Activated CD8-positive, alpha-beta T cell treated with anti-CD3 and anti-CD28 coated beads for 36 hours (primary cell): ENCODE measurements at regions of chr2 and their contacts with region 1.

Region 1: DNA sequence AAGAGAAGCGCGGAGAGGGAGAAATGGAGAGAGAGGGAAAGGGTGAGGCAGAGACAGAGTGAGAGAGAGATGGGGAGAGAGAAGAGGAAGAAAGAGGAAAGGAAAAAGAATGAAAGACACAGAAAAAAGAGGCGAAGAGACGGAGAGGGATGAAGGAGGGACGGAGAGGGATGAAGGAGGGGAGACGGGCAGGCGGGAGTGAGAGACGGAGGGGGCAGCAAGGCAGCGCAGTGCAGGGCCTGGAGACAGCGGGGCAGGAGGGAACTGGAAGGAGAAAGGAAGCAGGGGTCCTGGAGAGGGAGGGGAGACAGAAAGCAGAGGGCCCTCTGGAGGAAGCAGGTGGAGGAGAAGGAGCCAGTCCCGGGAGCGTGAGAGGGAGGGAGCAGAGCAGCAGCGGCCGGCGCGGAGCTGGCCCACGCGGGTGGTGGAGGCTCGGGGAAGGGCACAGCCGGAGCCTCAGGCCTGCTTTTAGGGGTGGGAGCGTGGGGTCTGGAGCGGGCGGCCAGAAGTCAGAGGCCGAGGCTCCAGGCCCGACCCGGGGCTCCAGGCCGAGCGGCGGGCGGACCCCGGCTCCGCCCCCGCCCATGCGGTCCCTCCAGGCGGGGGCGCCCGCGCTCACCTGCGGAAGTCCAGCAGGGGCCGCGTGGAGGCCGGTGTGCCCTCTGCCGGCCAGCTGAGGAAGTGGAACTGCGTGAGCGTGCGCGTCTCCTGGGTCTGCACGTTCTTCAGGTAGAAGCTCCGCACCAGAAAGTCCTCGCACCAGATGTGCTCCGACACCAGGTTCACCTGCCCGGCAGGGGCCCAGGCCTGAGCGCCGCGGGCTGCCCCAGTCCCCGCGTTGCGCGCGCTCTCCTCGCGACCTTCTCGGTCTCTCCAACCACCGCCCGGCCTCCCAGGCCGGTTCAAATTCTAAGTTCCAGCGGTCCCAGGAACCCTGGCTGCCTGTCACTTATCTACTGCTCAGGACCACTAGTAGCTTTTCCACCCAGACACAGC is 14.5 kb downstream of the PTPRN start:
- DNase-seq: peak; percentile 90
- ATAC-seq: peak; percentile 93
- H3K4me3 Mint-ChIP-seq: peak overlapping the region; percentile 64
- H3K27ac Mint-ChIP-seq: peak overlapping the region; percentile 77
- H3K4me1 Mint-ChIP-seq: peaks cover 32% of the 10 kb centered on the region
- H3K27me3 Mint-ChIP-seq: peaks cover 3% of the 10 kb centered on the region
- CTCF ChIP-seq: peak; percentile 99

Region 2: DNA sequence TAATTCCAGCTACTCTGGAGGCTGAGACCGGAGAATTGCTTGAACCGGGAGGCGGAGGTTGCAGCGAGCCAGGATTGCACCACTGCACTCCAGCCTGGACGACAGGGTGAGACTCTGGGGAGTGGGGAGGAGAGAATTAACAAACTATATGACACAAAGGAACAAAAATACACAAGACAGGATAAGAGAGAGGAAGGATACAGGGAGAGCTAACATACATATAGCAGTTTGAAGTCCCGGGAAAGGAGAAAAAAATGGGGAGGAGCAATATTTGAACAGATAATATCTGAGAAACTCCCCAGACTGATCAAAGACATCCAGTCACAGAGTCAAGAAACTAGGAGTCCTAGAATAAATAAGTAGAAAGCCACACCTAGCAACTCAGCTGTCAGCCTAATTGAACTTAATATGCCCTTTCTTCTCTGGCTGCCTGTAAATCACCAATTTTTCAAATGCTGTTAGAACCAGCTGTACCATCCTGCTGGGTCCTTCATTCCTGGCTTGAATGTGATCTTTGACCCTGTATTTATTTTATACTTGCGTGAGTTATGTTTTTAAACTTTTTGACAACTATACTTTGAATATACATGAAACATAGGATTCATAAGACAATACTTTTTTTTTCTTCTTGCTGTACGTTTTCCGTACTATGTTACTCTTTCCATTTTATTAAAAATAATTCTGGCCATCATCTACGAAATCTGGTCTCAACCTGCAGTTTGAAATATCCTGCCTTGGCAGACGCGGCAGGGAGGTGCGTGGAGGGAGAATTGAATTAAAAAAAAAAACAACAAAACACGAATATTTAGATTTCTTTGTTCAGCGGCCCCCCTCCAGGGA is 513.6 kb before region 1 on chr2:
- CTCF ChIA-PET with region 1: no interaction called
- POLR2A ChIA-PET with region 1: no interaction called
- intact Hi-C with region 1: no loop called
- DNase-seq: no peak
- ATAC-seq: no peak
- H3K4me3 Mint-ChIP-seq: no peak overlapping the region
- H3K27ac Mint-ChIP-seq: no peak overlapping the region
- H3K4me1 Mint-ChIP-seq: peaks cover 5% of the 10 kb centered on the region
- H3K27me3 Mint-ChIP-seq: peaks cover 42% of the 10 kb centered on the region
- CTCF ChIP-seq: no peak

Region 3: GRCh38 chr2:219099329-219099728 is 195.3 kb before region 1 on chr2:
- CTCF ChIA-PET with region 1: no interaction called
- POLR2A ChIA-PET with region 1: no interaction called
- intact Hi-C with region 1: no loop called
- DNase-seq: no peak
- ATAC-seq: no peak
- H3K4me3 Mint-ChIP-seq: no peak overlapping the region
- H3K27ac Mint-ChIP-seq: no peak overlapping the region
- H3K4me1 Mint-ChIP-seq: peaks cover 4% of the 10 kb centered on the region
- H3K27me3 Mint-ChIP-seq: no peaks in the 10 kb centered on the region
- CTCF ChIP-seq: no peak

Region 4: GRCh38 chr2:219160186-219161017 is 134.3 kb before region 1 on chr2 and contains the start of gene NHEJ1:
- CTCF ChIA-PET with region 1: interaction called, 50 read pairs
- POLR2A ChIA-PET with region 1: interaction called, 3 read pairs
- intact Hi-C with region 1: no loop called
- DNase-seq: peak; percentile 98
- ATAC-seq: peak; percentile 92
- H3K4me3 Mint-ChIP-seq: peak within 1 kb of the TSS; percentile 85
- H3K27ac Mint-ChIP-seq: peak within 1 kb of the TSS; percentile 93
- H3K4me1 Mint-ChIP-seq: peaks cover 18% of the 10 kb centered on the region
- H3K27me3 Mint-ChIP-seq: no peaks in the 10 kb centered on the region
- CTCF ChIP-seq: peak; percentile 99
- total RNA-seq, gene NHEJ1: 22.4 to 26.3 TPM

Region 5: GRCh38 chr2:219206442-219207253 is 88.0 kb before region 1 on chr2 and contains the start of gene ZFAND2B:
- CTCF ChIA-PET with region 1: interaction called, 13 read pairs
- POLR2A ChIA-PET with region 1: interaction called, 3 read pairs
- intact Hi-C with region 1: no loop called
- DNase-seq: peak; percentile 96
- ATAC-seq: peak; percentile 93
- H3K4me3 Mint-ChIP-seq: peak within 1 kb of the TSS; percentile 90
- H3K27ac Mint-ChIP-seq: peak within 1 kb of the TSS; percentile 96
- H3K4me1 Mint-ChIP-seq: peaks cover 41% of the 10 kb centered on the region
- H3K27me3 Mint-ChIP-seq: no peaks in the 10 kb centered on the region
- CTCF ChIP-seq: no peak
- total RNA-seq, gene ZFAND2B: 31.3 to 33.3 TPM

Region 6: DNA sequence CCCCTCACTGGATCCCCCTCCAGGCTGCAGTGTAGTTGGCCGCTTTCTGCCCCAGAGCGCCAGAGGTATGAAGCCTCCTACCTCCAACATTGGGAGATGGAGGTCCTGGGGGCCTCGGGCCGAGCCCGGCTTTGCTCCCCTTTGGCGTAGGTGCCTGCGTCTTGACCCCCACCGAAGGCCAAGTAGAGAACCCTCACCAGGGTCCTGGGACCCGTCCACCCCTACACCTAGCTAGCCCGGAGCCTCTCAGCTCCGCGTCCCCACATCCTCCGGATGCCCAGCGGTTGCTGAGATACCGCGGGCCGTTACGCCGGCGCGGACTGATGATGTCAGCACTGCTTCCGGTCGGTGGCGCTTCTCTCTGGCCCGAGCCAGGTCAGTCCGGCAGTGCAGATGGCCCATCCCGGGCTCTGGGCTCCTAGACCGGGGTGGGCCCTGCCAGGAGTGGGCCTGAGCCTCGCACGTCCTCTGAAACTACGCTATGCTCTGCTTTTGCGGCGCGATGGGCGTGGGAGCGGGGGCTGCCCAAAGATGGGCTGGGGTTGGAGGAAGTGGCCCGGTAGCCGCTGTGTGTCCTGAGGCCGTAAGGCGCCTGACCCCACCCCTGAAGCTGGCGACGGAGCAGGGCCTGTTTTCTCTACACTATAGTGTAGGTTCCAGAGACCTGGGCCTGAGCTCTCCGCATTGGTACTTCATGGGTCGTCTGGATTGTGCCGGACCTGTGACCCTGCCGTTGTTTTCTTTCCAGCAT is 49.3 kb before region 1 on chr2 and contains the starts of genes GLB1L and STK16:
- CTCF ChIA-PET with region 1: interaction called, 27 read pairs
- POLR2A ChIA-PET with region 1: no interaction called
- intact Hi-C with region 1: loop called (anchors 5 kb)
- DNase-seq: peak; percentile 93
- ATAC-seq: peak; percentile 58
- H3K4me3 Mint-ChIP-seq: peak within 1 kb of the TSS; percentile 98
- H3K27ac Mint-ChIP-seq: peak within 1 kb of the TSS; percentile 99
- H3K4me1 Mint-ChIP-seq: peaks cover 61% of the 10 kb centered on the region
- H3K27me3 Mint-ChIP-seq: no peaks in the 10 kb centered on the region
- CTCF ChIP-seq: no peak
- total RNA-seq, gene GLB1L: 1.2 to 2.8 TPM
- total RNA-seq, gene STK16: 34.4 to 35.4 TPM

Region 7: GRCh38 chr2:219278655-219279516 is 15.8 kb before region 1 on chr2 and contains the start of gene DNAJB2:
- CTCF ChIA-PET with region 1: interaction called, 336 read pairs
- POLR2A ChIA-PET with region 1: interaction called, 41 read pairs
- intact Hi-C with region 1: loop called (anchors 2 kb)
- DNase-seq: peak; percentile 100
- ATAC-seq: peak; percentile 86
- H3K4me3 Mint-ChIP-seq: peak within 1 kb of the TSS; percentile 80
- H3K27ac Mint-ChIP-seq: peak within 1 kb of the TSS; percentile 95
- H3K4me1 Mint-ChIP-seq: peaks cover 45% of the 10 kb centered on the region
- H3K27me3 Mint-ChIP-seq: no peaks in the 10 kb centered on the region
- CTCF ChIP-seq: no peak
- total RNA-seq, gene DNAJB2: 61.8 to 63.3 TPM